CD8-positive, alpha-beta T cell (primary cell): ENCODE measurements at regions of chr18 and their contacts with region 1.

Region 1: DNA sequence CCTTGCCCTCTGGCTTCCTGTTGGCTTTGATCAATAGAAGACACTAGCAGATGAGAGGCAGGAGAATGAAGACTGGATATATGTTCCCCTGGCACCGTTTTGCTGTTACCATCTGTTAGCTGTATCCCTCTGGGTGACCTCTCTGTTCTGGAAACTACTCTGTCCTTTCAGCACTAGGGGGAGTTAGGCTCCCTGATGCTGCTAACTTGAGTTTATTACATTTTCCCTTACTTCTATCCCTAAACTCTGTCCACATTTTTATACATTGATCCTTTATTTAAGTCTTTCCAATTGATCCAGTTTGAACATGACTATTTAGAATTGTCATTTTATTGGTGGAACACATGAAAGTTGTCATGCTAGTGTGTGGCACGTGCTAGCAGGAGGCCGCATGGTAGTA is 1014.3 kb upstream of the CDH2 start:
- DNase-seq: no peak
- ATAC-seq: no peak
- H3K4me3 ChIP-seq: no peak overlapping the region
- H3K4me3 Mint-ChIP-seq: no peak overlapping the region
- H3K27ac ChIP-seq: no peak overlapping the region
- H3K27ac Mint-ChIP-seq: no peak overlapping the region
- H3K4me1 ChIP-seq: no peaks in the 10 kb centered on the region
- H3K4me1 Mint-ChIP-seq: no peaks in the 10 kb centered on the region
- H3K27me3 ChIP-seq: no peaks in the 10 kb centered on the region
- H3K27me3 Mint-ChIP-seq: no peaks in the 10 kb centered on the region
- CTCF ChIP-seq: no peak

Region 2: GRCh38 chr18:29147944-29148343 is 43.3 kb before region 1 on chr18:
- CTCF ChIA-PET with region 1: no interaction called
- POLR2A ChIA-PET with region 1: no interaction called
- intact Hi-C with region 1: no loop called
- DNase-seq: no peak
- ATAC-seq: no peak
- H3K4me3 ChIP-seq: no peak overlapping the region
- H3K4me3 Mint-ChIP-seq: no peak overlapping the region
- H3K27ac ChIP-seq: no peak overlapping the region
- H3K27ac Mint-ChIP-seq: no peak overlapping the region
- H3K4me1 ChIP-seq: no peaks in the 10 kb centered on the region
- H3K4me1 Mint-ChIP-seq: no peaks in the 10 kb centered on the region
- H3K27me3 ChIP-seq: no peaks in the 10 kb centered on the region
- H3K27me3 Mint-ChIP-seq: no peaks in the 10 kb centered on the region
- CTCF ChIP-seq: no peak

Region 3: DNA sequence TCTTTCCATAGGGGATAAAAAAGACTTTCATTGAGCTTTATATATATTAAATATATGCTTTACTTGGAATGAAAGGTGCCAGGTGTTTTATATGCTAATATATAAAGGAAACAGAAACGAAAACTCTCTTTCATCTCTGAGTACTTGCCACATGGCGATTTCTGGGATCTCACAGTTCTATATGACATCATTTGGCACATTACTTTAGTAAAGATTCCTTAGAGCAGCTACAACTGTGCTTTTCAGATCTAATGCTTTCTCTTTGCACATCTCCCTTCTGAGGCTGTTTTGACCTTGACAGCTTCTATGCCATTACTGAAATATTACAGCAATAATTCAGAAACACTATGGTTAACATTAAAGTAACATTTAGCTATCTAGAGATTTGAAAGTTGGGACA is 68.6 kb after region 1 on chr18:
- CTCF ChIA-PET with region 1: no interaction called
- POLR2A ChIA-PET with region 1: no interaction called
- intact Hi-C with region 1: loop called in 1 of 2 experiments (anchors 10 kb)
- DNase-seq: no peak
- ATAC-seq: no peak
- H3K4me3 ChIP-seq: no peak overlapping the region
- H3K4me3 Mint-ChIP-seq: no peak overlapping the region
- H3K27ac ChIP-seq: no peak overlapping the region
- H3K27ac Mint-ChIP-seq: no peak overlapping the region
- H3K4me1 ChIP-seq: no peaks in the 10 kb centered on the region
- H3K4me1 Mint-ChIP-seq: no peaks in the 10 kb centered on the region
- H3K27me3 ChIP-seq: no peaks in the 10 kb centered on the region
- H3K27me3 Mint-ChIP-seq: no peaks in the 10 kb centered on the region
- CTCF ChIP-seq: no peak